T-cell (primary cell): ENCODE measurements at regions of chr6 and their contacts with region 1.

Region 1: DNA sequence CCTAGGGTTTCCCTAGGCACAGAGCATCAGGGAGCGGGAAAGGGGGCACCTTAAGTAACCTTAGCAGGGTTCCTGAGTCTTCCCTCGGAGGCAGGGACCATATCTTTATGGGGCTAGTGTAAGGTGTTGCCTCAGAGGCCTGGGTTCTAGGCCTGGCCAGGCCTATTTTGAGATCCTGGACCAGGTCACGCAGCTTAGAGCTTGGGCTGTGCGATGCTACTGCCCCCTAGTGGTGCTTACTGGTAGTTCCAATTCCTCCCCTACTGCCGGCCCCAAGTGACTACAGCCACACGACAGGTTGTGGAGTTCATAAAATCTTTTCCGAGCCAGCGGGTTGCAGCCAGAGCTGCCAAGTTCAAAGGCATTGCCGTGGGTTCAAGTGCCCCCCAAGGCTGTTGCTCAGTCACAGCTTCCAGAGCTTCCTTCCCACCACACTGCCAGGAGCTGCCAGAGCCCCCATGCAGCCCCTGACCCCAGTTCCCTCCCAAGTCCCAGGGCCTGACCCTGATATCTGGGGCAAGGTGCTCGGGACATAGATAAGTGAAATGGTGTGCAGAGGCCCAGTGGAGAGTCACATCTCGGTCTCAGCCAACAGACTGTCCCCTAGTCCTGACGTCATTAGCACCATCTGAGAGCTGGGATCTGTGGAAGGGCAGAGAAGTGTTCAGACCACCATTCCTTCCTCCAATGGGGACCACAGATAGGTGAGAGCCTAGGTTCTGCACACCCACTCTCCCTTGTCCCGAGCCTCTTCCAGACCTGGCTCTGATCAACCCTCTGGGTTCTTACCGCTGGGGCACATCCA is 3.3 kb downstream of the LRRC73 start:
- DNase-seq: peak; percentile 41 to 93 (median 71)
- ATAC-seq: peak; percentile 61 to 72 (median 68)
- H3K4me3 ChIP-seq: no peak overlapping the region
- H3K4me3 Mint-ChIP-seq: no peak overlapping the region
- H3K27ac ChIP-seq: peak overlapping the region; percentile 38
- H3K27ac Mint-ChIP-seq: peak overlapping the region in 1 of 2 donors; percentile 46
- H3K4me1 ChIP-seq: peaks cover 0 to 25% of the 10 kb centered on the region in 2 experiments
- H3K4me1 Mint-ChIP-seq: peaks cover 13 to 23% (median 22%) of the 10 kb centered on the region in 3 donors
- H3K27me3 ChIP-seq: peaks cover 0 to 34% of the 10 kb centered on the region in 2 experiments
- H3K27me3 Mint-ChIP-seq: peaks cover 17 to 19% of the 10 kb centered on the region in 2 donors

Region 2: GRCh38 chr6:43361269-43361668 is 145.6 kb before region 1 on chr6:
- CTCF ChIA-PET with region 1: interaction called in 1 of 2 experiments, 10 read pairs
- POLR2A ChIA-PET with region 1: interaction called in 1 of 2 experiments, 4 read pairs
- DNase-seq: no peak
- ATAC-seq: peak in 1 of 4 experiments; percentile 28
- H3K4me3 ChIP-seq: no peak overlapping the region
- H3K4me3 Mint-ChIP-seq: no peak overlapping the region
- H3K27ac ChIP-seq: no peak overlapping the region
- H3K27ac Mint-ChIP-seq: no peak overlapping the region
- H3K4me1 ChIP-seq: peaks cover 0 to 3% of the 10 kb centered on the region in 2 experiments
- H3K4me1 Mint-ChIP-seq: peaks cover 19 to 39% (median 36%) of the 10 kb centered on the region in 3 donors
- H3K27me3 ChIP-seq: no peaks in the 10 kb centered on the region
- H3K27me3 Mint-ChIP-seq: no peaks in the 10 kb centered on the region

Region 3: GRCh38 chr6:43516697-43517504 is 10.0 kb after region 1 on chr6 and contains the starts of genes POLR1C and YIPF3:
- CTCF ChIA-PET with region 1: interaction called in 1 of 2 experiments, 10 read pairs
- POLR2A ChIA-PET with region 1: no interaction called
- DNase-seq: peak; percentile 89 to 98 (median 95)
- ATAC-seq: peak; percentile 94 to 97 (median 96)
- H3K4me3 ChIP-seq: peak within 1 kb of the TSS; percentile 78 to 86
- H3K4me3 Mint-ChIP-seq: no peak within 1 kb of the TSS
- H3K27ac ChIP-seq: peak within 1 kb of the TSS; percentile 61
- H3K27ac Mint-ChIP-seq: no peak within 1 kb of the TSS
- H3K4me1 ChIP-seq: peaks cover 31 to 50% of the 10 kb centered on the region in 2 experiments
- H3K4me1 Mint-ChIP-seq: peaks cover 33% of the 10 kb centered on the region in 3 donors
- H3K27me3 ChIP-seq: no peaks in the 10 kb centered on the region
- H3K27me3 Mint-ChIP-seq: no peaks in the 10 kb centered on the region
- total RNA-seq, gene POLR1C: 42.3 to 49.8 (median 46.1) TPM
- total RNA-seq, gene YIPF3: 43.7 to 85.0 (median 80.0) TPM